Activated B cell treated with CpG ODN at 0.5 μM for 24 hours (primary cell): ENCODE measurements at regions of chr13 and their contacts with region 1.

Region 1: DNA sequence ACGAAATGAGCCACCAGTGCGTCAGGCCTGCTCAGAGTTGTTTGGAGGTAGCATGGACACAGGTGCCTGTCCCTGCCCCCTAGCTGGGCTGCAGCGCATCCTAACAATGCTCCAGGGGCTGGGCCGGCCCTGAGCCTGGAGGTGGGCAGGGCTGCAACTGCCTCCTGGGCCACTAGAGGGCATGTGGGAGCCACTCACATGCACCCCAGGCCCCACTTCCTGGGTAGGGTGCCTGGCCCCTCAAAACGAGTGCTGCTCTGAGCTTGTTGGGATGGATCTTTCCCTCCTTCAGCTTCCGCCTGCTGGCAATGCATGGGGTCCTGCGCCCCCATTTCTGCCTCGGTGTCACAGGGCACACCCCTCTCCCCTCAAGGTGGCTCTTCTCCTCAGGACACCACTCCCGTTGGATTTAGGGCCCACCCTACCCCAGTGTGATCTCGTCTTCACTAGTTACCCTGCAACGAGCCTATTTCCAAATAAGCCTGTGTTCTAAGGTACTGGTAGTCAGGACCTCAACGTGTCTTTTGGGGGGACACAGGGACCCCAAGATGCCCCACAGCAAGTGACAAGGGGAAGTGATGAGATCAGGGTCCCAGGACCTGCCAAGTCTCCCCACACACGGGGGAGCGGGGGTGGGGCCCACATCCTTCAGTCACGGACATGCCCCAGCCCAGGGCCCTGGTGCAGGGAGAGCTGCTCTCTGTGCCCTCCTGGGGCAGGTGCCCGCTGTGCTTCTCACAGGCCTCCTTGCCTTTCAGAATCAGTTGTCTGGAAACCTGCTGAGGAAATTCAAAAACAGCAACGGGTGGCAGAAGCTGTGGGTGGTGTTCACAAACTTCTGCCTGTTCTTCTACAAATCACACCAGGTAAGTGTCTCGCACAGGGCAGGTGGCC is 131.3 kb downstream of the STK24 start:
- DNase-seq: peak; percentile 71
- ATAC-seq: peak; percentile 98
- H3K4me3 Mint-ChIP-seq: peak overlapping the region; percentile 38
- H3K27ac Mint-ChIP-seq: peak overlapping the region; percentile 76
- H3K4me1 Mint-ChIP-seq: peaks cover 9% of the 10 kb centered on the region
- H3K27me3 Mint-ChIP-seq: no peaks in the 10 kb centered on the region
- CTCF ChIP-seq: peak; percentile 87

Region 2: DNA sequence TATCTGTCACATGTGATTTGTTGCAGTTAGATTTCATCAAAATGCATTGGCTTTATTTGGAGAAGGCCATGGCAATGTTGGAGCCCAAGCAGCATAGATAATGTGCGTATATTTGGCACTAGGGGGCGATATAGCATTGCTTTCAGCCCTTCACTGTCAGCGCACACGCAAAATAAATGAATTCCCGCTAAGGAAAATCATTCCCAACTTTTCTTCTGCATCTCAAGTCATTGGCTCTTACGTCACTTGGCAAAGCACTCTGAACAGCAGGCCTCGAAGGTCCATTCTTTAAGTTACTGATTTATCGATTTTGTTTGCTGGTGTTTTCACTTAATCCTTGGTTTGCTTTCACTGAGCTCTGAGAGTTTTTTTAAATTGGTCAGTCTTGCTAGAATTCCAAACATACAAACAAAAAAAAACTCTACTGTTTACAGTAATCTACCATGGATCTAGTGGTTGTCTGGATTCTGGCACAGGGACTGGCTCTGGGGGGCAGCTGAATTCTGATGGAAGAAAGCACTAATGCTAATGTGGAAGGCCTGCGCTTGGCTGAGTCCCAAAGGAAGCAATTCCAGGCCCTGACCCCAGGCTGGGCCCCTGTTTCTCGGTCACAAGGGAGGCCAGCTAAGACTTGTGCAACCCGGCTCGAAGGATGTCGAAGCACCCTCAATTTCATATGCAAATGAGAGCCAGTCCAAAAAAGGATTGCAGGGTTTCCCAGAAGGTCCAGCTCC is 589.9 kb before region 1 on chr13:
- CTCF ChIA-PET with region 1: interaction called, 4 read pairs
- POLR2A ChIA-PET with region 1: no interaction called
- intact Hi-C with region 1: loop called (anchors 1 kb)
- DNase-seq: no peak
- ATAC-seq: no peak
- H3K4me3 Mint-ChIP-seq: no peak overlapping the region
- H3K27ac Mint-ChIP-seq: no peak overlapping the region
- H3K4me1 Mint-ChIP-seq: peaks cover 8% of the 10 kb centered on the region
- H3K27me3 Mint-ChIP-seq: peaks cover 3% of the 10 kb centered on the region
- CTCF ChIP-seq: peak; percentile 23

Region 3: GRCh38 chr13:98105929-98106336 is 339.7 kb before region 1 on chr13:
- CTCF ChIA-PET with region 1: no interaction called
- POLR2A ChIA-PET with region 1: no interaction called
- intact Hi-C with region 1: no loop called
- DNase-seq: no peak
- ATAC-seq: no peak
- H3K4me3 Mint-ChIP-seq: no peak overlapping the region
- H3K27ac Mint-ChIP-seq: no peak overlapping the region
- H3K4me1 Mint-ChIP-seq: no peaks in the 10 kb centered on the region
- H3K27me3 Mint-ChIP-seq: peaks cover 1% of the 10 kb centered on the region
- CTCF ChIP-seq: no peak

Region 4: DNA sequence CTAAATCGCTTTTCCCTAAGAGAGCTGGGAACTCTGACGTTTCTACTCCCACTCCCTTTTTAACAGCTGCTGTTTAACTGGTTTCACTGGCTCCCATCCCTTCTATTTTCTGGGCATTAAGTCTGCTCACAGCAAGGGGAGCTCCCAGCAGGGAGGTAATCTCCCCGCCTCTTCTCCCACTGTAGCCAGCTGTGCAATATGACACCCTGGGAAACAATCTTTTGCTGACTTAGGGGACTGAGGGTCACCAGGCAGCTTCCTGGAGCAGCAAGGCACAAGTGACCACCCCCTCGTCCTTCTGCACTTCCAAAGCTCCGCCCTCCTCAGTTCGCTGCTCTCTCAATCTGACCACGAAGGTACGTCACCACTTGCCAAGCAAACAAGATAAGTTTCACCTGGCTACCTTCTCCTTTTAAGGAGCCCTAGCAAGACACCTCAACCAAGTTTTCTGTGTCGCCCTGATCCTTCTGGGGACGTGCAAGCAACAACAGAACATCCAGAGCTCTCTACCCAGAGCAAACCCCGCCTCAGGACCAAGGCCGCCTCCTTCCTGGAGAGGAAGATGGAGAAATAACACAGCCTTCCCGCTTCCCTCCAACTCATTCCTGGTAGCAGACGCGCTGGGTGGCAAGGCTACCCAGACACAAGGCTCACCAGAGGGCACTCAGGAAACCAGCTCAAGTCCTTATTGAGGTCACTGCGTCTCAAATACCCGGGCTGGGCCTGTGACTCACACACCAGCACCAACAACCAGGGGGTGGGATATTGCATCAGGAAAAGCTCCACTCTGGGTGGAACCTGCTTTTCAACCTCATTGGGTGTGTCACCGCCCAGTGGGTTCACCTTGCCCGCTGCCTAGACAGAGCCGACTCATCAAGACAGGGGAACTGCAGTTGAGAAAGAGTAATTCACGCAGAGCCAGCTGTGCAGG is 39.0 kb after region 1 on chr13:
- CTCF ChIA-PET with region 1: interaction called, 9 read pairs
- POLR2A ChIA-PET with region 1: no interaction called
- intact Hi-C with region 1: loop called (anchors 5 kb)
- DNase-seq: no peak
- ATAC-seq: no peak
- H3K4me3 Mint-ChIP-seq: no peak overlapping the region
- H3K27ac Mint-ChIP-seq: peak overlapping the region; percentile 22
- H3K4me1 Mint-ChIP-seq: peaks cover 90% of the 10 kb centered on the region
- H3K27me3 Mint-ChIP-seq: no peaks in the 10 kb centered on the region
- CTCF ChIP-seq: no peak

Region 5: DNA sequence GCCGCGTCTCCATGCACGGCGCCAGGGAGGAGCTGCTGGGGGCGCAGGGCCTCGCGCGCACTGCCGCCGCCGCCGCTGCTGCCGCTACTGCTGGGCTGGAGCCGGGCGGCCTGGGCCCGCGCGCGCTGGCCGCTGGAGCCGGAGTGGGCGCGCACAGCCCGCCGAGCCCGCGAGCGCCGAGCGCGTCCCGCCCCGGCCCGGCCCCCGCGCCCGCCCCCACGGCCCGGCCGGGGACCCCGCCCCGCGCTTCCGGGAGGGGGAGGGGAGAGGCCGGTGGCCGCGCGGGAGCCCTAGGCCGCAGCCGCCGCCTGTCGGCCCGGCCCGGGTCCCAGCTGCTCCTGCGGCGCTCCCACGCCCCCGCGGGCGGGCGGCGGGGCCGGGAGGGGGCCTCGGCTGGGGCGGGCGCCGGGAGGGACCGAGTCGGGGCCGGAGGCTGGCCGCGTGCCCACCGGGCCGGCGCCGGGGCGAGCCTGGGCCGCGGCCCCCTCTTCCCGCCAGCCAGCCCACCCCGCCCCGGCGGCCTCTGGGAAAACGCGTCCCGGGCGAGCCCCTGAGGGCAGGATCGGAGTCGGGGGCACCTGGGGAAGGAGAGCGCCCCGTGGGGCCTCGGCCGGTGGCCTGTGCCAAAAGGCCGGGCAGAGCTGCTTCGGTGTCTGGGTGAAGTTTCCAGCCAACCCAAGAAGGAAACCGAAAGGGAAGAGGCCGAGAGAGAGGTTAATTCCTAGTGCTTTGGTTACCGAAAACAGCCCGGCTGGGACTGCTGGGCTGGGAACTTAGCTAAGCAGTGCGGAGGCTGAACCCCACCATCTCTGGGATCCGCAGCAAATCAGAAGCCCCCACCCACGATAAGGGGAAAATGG is 131.6 kb after region 1 on chr13 and contains the start of gene STK24:
- CTCF ChIA-PET with region 1: interaction called, 10 read pairs
- POLR2A ChIA-PET with region 1: interaction called, 4 read pairs
- intact Hi-C with region 1: loop called (anchors 1 kb)
- DNase-seq: peak; percentile 82
- ATAC-seq: peak; percentile 78
- H3K4me3 Mint-ChIP-seq: peak within 1 kb of the TSS; percentile 88
- H3K27ac Mint-ChIP-seq: peak within 1 kb of the TSS; percentile 91
- H3K4me1 Mint-ChIP-seq: peaks cover 45% of the 10 kb centered on the region
- H3K27me3 Mint-ChIP-seq: no peaks in the 10 kb centered on the region
- CTCF ChIP-seq: no peak
- total RNA-seq, gene STK24: 74.8 and 84.8 TPM in 2 replicates

Region 6: GRCh38 chr13:98842864-98843481 is 397.4 kb after region 1 on chr13:
- CTCF ChIA-PET with region 1: interaction called, 4 read pairs
- POLR2A ChIA-PET with region 1: no interaction called
- intact Hi-C with region 1: loop called (anchors 1 kb)
- DNase-seq: peak; percentile 34
- ATAC-seq: peak; percentile 86
- H3K4me3 Mint-ChIP-seq: no peak overlapping the region
- H3K27ac Mint-ChIP-seq: no peak overlapping the region
- H3K4me1 Mint-ChIP-seq: no peaks in the 10 kb centered on the region
- H3K27me3 Mint-ChIP-seq: no peaks in the 10 kb centered on the region
- CTCF ChIP-seq: peak; percentile 37